OCI-LY7 (cell line): ENCODE measurements at regions of chr3 and their contacts with region 1.

Region 1: GRCh38 chr3:151086484-151087456 is 1.3 kb downstream of the MED12L start:
- DNase-seq: peak; percentile 92
- H3K4me3 ChIP-seq: peak overlapping the region; percentile 88
- H3K27ac ChIP-seq: peak overlapping the region; percentile 71
- H3K4me1 ChIP-seq: peaks cover 25% of the 10 kb centered on the region
- CTCF ChIP-seq: peak; percentile 60

Region 2: DNA sequence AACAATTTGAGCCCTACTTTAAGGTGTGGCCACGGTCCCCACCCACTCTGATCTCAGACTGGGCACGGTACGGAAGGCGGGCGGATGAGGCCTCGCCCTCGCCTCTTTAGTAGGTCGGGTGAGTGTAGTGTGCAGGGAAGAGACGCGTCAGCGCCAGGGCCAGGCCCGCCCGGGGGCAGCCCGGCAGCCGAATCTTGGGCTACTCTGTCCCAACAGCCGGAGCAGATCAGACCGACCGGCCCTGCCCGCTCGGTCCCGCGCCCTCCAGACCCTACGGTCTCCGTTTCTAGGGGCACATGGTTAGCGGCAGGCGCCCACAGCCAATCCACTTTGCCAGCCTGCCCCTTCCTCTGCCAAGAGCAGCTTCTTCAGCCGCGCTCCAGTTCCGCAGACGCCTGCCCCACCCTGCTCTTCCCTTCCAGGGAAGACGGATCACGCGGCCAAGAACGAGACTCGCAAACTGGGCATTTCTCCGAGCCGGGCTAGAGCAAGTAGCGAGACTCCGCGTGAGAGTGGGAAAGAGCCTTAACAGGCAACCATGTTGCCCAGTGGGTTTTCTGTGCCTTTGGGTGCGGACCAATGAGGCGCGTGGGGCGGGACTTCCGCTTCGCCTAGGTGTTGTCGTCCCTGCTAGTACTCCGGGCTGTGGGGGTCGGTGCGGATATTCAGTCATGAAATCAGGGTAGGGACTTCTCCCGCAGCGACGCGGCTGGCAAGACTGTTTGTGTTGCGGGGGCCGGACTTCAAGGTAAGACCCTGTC is 1274.0 kb before region 1 on chr3 and contains the start of gene RNF13:
- CTCF ChIA-PET with region 1: no interaction called
- POLR2A ChIA-PET with region 1: no interaction called
- intact Hi-C with region 1: loop called (anchors 5 kb)
- DNase-seq: peak; percentile 94
- H3K4me3 ChIP-seq: peak within 1 kb of the TSS; percentile 87
- H3K27ac ChIP-seq: peak within 1 kb of the TSS; percentile 77
- H3K4me1 ChIP-seq: peaks cover 43% of the 10 kb centered on the region
- CTCF ChIP-seq: no peak
- total RNA-seq, gene RNF13: 16.1 and 26.2 TPM in 2 replicates

Region 3: GRCh38 chr3:150603153-150603979 is 483.4 kb before region 1 on chr3 and contains the start of gene SELENOT:
- CTCF ChIA-PET with region 1: no interaction called
- POLR2A ChIA-PET with region 1: no interaction called
- intact Hi-C with region 1: loop called (anchors 5 kb)
- DNase-seq: peak; percentile 95
- H3K4me3 ChIP-seq: peak within 1 kb of the TSS; percentile 88
- H3K27ac ChIP-seq: peak within 1 kb of the TSS; percentile 93
- H3K4me1 ChIP-seq: peaks cover 54% of the 10 kb centered on the region
- CTCF ChIP-seq: 0 out of 2 replicates have a peak, but pooled peaks have one; percentile 29
- total RNA-seq, gene SELENOT: 36.8 and 60.7 TPM in 2 replicates

Region 4: GRCh38 chr3:150763122-150763841 is 323.5 kb before region 1 on chr3 and contains the start of gene SIAH2:
- CTCF ChIA-PET with region 1: no interaction called
- POLR2A ChIA-PET with region 1: interaction called, 4 read pairs
- intact Hi-C with region 1: loop called (anchors 1 kb)
- DNase-seq: peak; percentile 92
- H3K4me3 ChIP-seq: peak within 1 kb of the TSS; percentile 78
- H3K27ac ChIP-seq: peak within 1 kb of the TSS; percentile 58
- H3K4me1 ChIP-seq: peaks cover 71% of the 10 kb centered on the region
- CTCF ChIP-seq: no peak
- total RNA-seq, gene SIAH2: 22.2 and 22.7 TPM in 2 replicates

Region 5: DNA sequence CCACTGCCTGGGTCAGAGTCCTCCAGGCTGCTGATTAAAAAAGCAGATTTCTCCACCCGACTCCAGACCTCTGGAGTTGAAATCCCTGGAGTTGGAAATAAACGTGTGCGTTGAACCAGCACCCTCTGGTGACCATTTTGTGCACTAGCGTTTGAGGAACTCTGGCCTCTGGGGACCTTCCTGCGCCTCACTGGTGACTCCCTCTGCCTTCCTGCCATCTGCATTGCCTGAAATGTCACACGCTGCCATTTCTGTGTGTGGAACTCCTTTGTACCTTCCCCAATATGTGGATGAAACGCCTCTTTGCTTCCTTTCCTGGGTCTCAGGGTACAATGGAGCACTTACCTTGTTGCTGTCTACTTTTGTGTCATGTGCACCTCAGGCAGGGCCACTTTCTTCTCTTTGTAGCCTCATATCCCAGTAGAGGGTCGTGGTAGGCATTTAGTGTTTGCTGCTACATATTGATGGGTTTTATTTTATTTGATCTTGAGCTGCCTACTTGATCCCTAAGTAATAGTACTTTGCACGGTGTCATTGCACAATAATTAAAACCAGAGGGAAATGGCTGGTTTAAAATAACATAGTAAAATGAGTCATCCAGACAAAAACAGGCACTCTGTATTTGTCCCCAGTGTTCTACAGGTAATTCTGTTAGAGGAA is 59.4 kb after region 1 on chr3:
- CTCF ChIA-PET with region 1: interaction called, 4 read pairs
- POLR2A ChIA-PET with region 1: interaction called, 14 read pairs
- intact Hi-C with region 1: loop called (anchors 1 kb)
- DNase-seq: peak; percentile 83
- H3K4me3 ChIP-seq: peak overlapping the region; percentile 10
- H3K27ac ChIP-seq: no peak overlapping the region
- H3K4me1 ChIP-seq: peaks cover 12% of the 10 kb centered on the region
- CTCF ChIP-seq: peak; percentile 96